ENCODE measurements at regions of chr2 and their contacts with region 1.

Region 1: GRCh38 chr2:199861132-199861774 is 10.3 kb upstream of the FTCDNL1 start:
- DNase-seq: peak in 3 of 14 experiments; percentile 13 to 24 (median 22)
- ATAC-seq: no peak
- H3K4me3 ChIP-seq: no peak overlapping the region
- H3K4me3 Mint-ChIP-seq: no peak overlapping the region
- H3K27ac ChIP-seq: no peak overlapping the region
- H3K27ac Mint-ChIP-seq: no peak overlapping the region
- H3K4me1 ChIP-seq: no peaks in the 10 kb centered on the region
- H3K4me1 Mint-ChIP-seq: no peaks in the 10 kb centered on the region
- H3K27me3 ChIP-seq: peaks cover 0 to 7% of the 10 kb centered on the region in 2 experiments
- H3K27me3 Mint-ChIP-seq: peaks cover 36% of the 10 kb centered on the region
- CTCF ChIP-seq: peak; percentile 64

Region 2: GRCh38 chr2:199704358-199705238 is 156.7 kb before region 1 on chr2:
- CTCF ChIA-PET with region 1: no interaction called
- POLR2A ChIA-PET with region 1: interaction called, 3 read pairs
- intact Hi-C with region 1: loop called (anchors 10 kb)
- DNase-seq: peak in 3 of 14 experiments; percentile 30 to 49 (median 49)
- ATAC-seq: no peak
- H3K4me3 ChIP-seq: no peak overlapping the region
- H3K4me3 Mint-ChIP-seq: no peak overlapping the region
- H3K27ac ChIP-seq: no peak overlapping the region
- H3K27ac Mint-ChIP-seq: no peak overlapping the region
- H3K4me1 ChIP-seq: no peaks in the 10 kb centered on the region
- H3K4me1 Mint-ChIP-seq: no peaks in the 10 kb centered on the region
- H3K27me3 ChIP-seq: no peaks in the 10 kb centered on the region
- H3K27me3 Mint-ChIP-seq: no peaks in the 10 kb centered on the region
- CTCF ChIP-seq: peak; percentile 11

Measured in CD4-positive, alpha-beta T cell (primary cell).